Activated B cell treated with CpG ODN at 0.5 μM for 24 hours (primary cell): ENCODE measurements at regions of chrX and their contacts with region 1.

Region 1: GRCh38 chrX:11341274-11342201 is 48.3 kb downstream of the AMELX start:
- DNase-seq: peak; percentile 16
- ATAC-seq: peak; percentile 75
- H3K4me3 Mint-ChIP-seq: peak overlapping the region; percentile 52
- H3K27ac Mint-ChIP-seq: peak overlapping the region; percentile 91
- H3K4me1 Mint-ChIP-seq: peaks cover 42% of the 10 kb centered on the region
- H3K27me3 Mint-ChIP-seq: no peaks in the 10 kb centered on the region
- CTCF ChIP-seq: no peak

Region 2: GRCh38 chrX:10945498-10945897 is 396.0 kb before region 1 on chrX:
- CTCF ChIA-PET with region 1: no interaction called
- POLR2A ChIA-PET with region 1: no interaction called
- intact Hi-C with region 1: no loop called
- DNase-seq: no peak
- ATAC-seq: no peak
- H3K4me3 Mint-ChIP-seq: no peak overlapping the region
- H3K27ac Mint-ChIP-seq: no peak overlapping the region
- H3K4me1 Mint-ChIP-seq: no peaks in the 10 kb centered on the region
- H3K27me3 Mint-ChIP-seq: no peaks in the 10 kb centered on the region
- CTCF ChIP-seq: no peak

Region 3: DNA sequence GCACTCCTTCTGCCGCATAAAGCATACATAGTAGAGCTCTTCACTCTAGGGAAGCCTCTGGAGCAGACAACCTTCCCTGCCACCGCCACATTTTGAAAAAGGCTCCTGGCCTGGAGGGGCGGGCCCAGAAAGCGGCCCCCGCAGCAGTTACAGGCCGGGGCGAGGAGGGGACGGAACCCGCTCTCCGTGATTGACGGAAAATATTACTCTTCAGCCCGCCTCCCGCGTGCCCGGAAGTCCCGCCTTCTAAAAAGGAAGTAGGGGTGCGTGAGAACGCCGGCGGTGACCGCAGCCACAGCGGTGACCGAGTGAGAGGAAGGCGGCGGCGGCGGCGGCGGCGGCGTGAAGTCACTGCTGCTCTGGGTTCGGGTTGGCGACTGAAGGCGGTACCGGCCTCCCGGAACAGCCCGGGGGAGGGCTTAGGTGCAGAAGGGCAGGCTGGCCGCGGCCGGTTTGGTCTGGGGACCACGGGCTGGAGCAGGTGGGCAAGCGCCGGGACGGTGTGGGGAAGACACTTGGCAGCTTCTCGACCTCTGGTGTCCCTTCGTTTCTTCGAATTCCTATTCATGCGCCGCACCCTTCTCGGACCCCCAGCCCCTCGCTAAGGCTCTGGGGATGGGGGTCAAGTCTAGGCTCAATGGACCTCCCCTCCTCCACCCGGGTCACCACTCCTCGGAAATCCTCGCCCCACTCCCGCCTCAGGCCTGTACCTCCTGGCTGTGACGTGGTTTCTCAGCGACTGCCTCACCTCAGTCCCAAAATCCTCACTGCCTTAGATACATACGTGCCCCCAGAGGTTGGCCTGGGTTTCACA is 230.3 kb before region 1 on chrX and contains the start of gene HCCS:
- CTCF ChIA-PET with region 1: no interaction called
- POLR2A ChIA-PET with region 1: no interaction called
- intact Hi-C with region 1: loop called (anchors 1 kb)
- DNase-seq: peak; percentile 70
- ATAC-seq: peak; percentile 87
- H3K4me3 Mint-ChIP-seq: peak within 1 kb of the TSS; percentile 92
- H3K27ac Mint-ChIP-seq: peak within 1 kb of the TSS; percentile 94
- H3K4me1 Mint-ChIP-seq: peaks cover 38% of the 10 kb centered on the region
- H3K27me3 Mint-ChIP-seq: no peaks in the 10 kb centered on the region
- CTCF ChIP-seq: no peak
- total RNA-seq, gene HCCS: 22.6 and 26.6 TPM in 2 replicates

Region 4: DNA sequence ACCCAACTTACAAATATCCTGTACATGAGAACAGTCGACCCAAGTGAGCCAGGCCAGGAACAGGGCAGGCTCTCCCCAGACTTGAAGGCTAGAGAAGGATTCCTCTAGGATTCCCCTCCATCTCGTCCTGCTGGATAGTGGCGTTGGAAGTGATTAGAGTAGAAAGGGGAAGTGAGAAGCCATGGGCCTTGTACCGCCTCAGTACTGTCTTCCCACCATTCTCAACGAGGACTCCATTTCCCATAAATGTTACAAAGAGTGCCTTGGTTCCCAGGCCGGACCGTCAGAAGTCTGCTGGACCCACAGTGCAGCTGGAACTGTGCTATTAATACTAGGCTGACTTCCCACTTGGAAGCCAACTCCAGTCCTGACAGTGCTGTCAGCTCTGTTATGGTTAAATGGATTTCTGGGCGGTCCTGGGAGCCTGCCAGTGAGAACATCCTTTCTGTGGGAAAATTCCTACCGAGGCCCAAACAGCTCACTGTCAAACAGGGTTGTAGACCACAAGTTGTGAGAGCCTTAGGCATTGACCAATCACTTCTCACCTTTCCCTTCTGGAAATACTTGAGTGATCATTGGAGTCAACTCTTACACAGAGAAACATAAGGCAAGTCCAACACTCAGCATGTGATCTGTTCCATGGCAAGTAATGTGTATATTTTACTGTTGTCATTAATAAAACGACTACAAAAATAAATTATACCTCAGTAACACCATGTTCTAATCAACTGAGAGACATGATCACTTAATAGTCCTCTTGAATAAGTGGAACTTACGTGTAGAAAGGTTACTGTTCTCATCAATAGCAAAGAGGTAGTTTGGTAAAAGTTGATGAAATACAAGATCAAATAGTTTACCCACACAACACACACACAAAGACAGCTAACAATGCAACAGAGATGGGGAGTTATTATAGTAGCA is 10.1 kb after region 1 on chrX:
- CTCF ChIA-PET with region 1: no interaction called
- POLR2A ChIA-PET with region 1: interaction called, 6 read pairs
- intact Hi-C with region 1: loop called (anchors 1 kb)
- DNase-seq: no peak
- ATAC-seq: peak; percentile 53
- H3K4me3 Mint-ChIP-seq: no peak overlapping the region
- H3K27ac Mint-ChIP-seq: peak overlapping the region; percentile 81
- H3K4me1 Mint-ChIP-seq: peaks cover 32% of the 10 kb centered on the region
- H3K27me3 Mint-ChIP-seq: no peaks in the 10 kb centered on the region
- CTCF ChIP-seq: no peak

Region 5: DNA sequence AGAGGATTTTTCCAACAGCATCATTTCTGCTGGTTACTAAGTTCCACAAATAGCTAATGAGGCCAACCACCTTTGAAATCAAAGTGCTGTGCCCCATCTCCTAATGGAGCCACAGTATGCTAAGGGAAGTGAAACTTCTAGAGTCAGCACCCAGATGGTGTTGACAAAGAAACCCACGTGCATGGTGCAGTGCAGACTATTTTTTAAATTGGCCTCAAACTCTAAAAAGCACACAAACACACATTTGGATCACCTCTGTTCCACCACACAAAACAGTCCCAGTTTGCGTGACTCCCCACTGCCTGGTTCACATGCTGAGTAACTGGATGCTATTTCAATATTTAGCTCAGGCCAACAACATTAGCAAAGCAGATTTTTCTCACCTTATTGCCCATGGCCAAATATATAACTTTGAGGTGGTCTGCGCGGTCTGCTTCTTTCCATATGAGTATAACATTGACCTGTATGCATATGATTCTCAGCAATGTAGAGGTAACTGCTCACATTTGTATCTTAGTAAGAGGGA is 21.6 kb after region 1 on chrX:
- CTCF ChIA-PET with region 1: no interaction called
- POLR2A ChIA-PET with region 1: interaction called, 6 read pairs
- intact Hi-C with region 1: loop called (anchors 1 kb)
- DNase-seq: peak; percentile 17
- ATAC-seq: peak; percentile 96
- H3K4me3 Mint-ChIP-seq: peak overlapping the region; percentile 19
- H3K27ac Mint-ChIP-seq: peak overlapping the region; percentile 86
- H3K4me1 Mint-ChIP-seq: peaks cover 27% of the 10 kb centered on the region
- H3K27me3 Mint-ChIP-seq: no peaks in the 10 kb centered on the region
- CTCF ChIP-seq: no peak

Region 6: GRCh38 chrX:11758400-11759171 is 417.0 kb after region 1 on chrX:
- CTCF ChIA-PET with region 1: no interaction called
- POLR2A ChIA-PET with region 1: no interaction called
- intact Hi-C with region 1: loop called (anchors 2 kb)
- DNase-seq: peak; percentile 81
- ATAC-seq: peak; percentile 65
- H3K4me3 Mint-ChIP-seq: peak overlapping the region; percentile 94
- H3K27ac Mint-ChIP-seq: peak overlapping the region; percentile 95
- H3K4me1 Mint-ChIP-seq: peaks cover 35% of the 10 kb centered on the region
- H3K27me3 Mint-ChIP-seq: no peaks in the 10 kb centered on the region
- CTCF ChIP-seq: no peak

Region 7: DNA sequence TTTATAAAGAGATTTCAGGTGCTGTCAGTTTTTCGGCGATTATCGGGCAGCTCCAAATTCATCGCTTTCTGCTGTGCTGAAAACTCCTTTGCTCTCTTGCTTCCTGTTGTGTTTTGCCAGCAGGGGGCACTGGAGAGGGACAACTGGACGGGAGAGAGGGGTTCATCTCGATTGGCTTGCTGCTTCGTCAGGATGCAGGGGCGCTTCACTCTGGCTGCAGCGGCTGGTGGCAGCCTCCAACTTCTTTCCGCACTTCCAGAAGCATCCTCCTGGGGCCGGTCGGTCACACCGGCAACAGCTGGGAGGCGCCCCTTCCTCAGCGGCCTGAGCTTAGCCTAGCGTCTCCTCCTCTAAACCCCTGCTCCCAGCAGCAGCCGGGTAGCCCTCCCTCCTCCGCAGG is 446.0 kb after region 1 on chrX:
- CTCF ChIA-PET with region 1: no interaction called
- POLR2A ChIA-PET with region 1: no interaction called
- intact Hi-C with region 1: loop called (anchors 1 kb)
- DNase-seq: peak; percentile 46
- ATAC-seq: peak; percentile 65
- H3K4me3 Mint-ChIP-seq: peak overlapping the region; percentile 53
- H3K27ac Mint-ChIP-seq: no peak overlapping the region
- H3K4me1 Mint-ChIP-seq: peaks cover 27% of the 10 kb centered on the region
- H3K27me3 Mint-ChIP-seq: no peaks in the 10 kb centered on the region
- CTCF ChIP-seq: no peak

Region 8: GRCh38 chrX:11792461-11793421 is 451.2 kb after region 1 on chrX:
- CTCF ChIA-PET with region 1: no interaction called
- POLR2A ChIA-PET with region 1: no interaction called
- intact Hi-C with region 1: loop called (anchors 1 kb)
- DNase-seq: peak; percentile 48
- ATAC-seq: peak; percentile 91
- H3K4me3 Mint-ChIP-seq: peak overlapping the region; percentile 63
- H3K27ac Mint-ChIP-seq: peak overlapping the region; percentile 90
- H3K4me1 Mint-ChIP-seq: peaks cover 46% of the 10 kb centered on the region
- H3K27me3 Mint-ChIP-seq: no peaks in the 10 kb centered on the region
- CTCF ChIP-seq: no peak